Endothelial cell of umbilical vein (primary cell): ENCODE measurements at regions of chr20 and their contacts with region 1.

Region 1: GRCh38 chr20:6708010-6708409 is 59.5 kb upstream of the BMP2 start:
- DNase-seq: peak; percentile 91
- H3K4me3 ChIP-seq: no peak overlapping the region
- H3K27ac ChIP-seq: peak overlapping the region; percentile 11
- H3K4me1 ChIP-seq: peaks cover 68% of the 10 kb centered on the region
- H3K27me3 ChIP-seq: no peaks in the 10 kb centered on the region
- CTCF ChIP-seq: no peak
- POLR2A ChIP-seq: no peak

Region 2: DNA sequence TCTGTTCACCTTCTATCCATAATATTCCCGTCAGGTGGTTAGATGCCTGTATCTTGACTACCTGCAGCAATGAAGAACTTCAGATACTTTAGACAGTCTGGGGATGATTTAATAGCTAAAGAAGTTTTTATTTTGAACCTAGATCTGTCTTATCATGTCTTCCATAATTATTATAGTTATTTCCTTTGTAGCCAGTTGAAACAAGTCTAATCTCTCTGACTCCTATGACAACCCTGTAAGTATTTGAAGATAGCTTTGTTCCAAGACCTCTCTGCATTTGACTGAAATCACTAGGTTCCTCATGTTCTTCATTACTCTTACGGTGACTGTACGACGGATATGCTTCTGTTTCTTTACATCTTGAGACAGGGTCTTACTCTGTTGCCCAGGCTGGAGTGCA is 257.2 kb before region 1 on chr20:
- CTCF ChIA-PET with region 1: no interaction called
- POLR2A ChIA-PET with region 1: no interaction called
- dilution Hi-C with region 1: no loop called
- intact Hi-C with region 1: no loop called
- DNase-seq: no peak
- H3K4me3 ChIP-seq: no peak overlapping the region
- H3K27ac ChIP-seq: no peak overlapping the region
- H3K4me1 ChIP-seq: no peaks in the 10 kb centered on the region
- H3K27me3 ChIP-seq: no peaks in the 10 kb centered on the region
- CTCF ChIP-seq: no peak
- POLR2A ChIP-seq: no peak

Region 3: DNA sequence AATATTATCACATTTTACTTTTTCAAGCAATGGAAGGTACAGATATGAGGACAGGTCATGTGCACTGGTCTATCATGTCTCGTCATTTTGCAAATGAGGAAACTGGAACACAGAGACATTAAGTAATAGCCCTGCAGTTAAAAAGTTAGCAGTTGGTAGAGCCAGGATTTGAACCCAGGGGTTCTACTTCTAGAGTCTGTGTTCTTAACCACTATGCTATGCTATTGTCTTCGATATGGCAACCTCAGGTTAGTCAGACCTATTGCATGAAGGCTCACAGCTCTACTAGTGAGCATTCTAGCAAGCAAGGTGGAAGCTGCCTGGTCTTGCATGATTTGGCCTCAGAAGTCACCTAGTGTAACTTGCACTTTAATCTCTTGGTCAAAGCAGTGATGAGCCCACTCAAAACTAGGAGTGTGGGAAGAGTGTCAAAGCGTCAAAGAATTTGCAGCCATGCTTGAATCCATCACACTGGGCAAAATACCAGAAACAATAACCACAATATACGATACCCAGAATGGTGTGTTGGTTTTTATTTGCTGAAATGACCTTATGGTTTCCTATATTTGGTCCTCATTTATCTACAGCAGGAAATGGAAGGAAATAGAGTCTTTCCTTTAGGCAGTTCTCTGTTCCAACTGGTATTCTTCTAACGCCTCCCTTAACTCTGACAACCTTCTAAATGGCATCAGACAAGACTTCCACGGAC is 39.0 kb after region 1 on chr20:
- CTCF ChIA-PET with region 1: no interaction called
- POLR2A ChIA-PET with region 1: no interaction called
- dilution Hi-C with region 1: no loop called
- intact Hi-C with region 1: loop called (anchors 5 kb)
- DNase-seq: peak; percentile 69
- H3K4me3 ChIP-seq: no peak overlapping the region
- H3K27ac ChIP-seq: no peak overlapping the region
- H3K4me1 ChIP-seq: peaks cover 13% of the 10 kb centered on the region
- H3K27me3 ChIP-seq: peaks cover 5 to 6% of the 10 kb centered on the region in 2 experiments
- CTCF ChIP-seq: no peak
- POLR2A ChIP-seq: no peak